ENCODE measurements at regions of chr3 and their contacts with region 1.

Region 1: DNA sequence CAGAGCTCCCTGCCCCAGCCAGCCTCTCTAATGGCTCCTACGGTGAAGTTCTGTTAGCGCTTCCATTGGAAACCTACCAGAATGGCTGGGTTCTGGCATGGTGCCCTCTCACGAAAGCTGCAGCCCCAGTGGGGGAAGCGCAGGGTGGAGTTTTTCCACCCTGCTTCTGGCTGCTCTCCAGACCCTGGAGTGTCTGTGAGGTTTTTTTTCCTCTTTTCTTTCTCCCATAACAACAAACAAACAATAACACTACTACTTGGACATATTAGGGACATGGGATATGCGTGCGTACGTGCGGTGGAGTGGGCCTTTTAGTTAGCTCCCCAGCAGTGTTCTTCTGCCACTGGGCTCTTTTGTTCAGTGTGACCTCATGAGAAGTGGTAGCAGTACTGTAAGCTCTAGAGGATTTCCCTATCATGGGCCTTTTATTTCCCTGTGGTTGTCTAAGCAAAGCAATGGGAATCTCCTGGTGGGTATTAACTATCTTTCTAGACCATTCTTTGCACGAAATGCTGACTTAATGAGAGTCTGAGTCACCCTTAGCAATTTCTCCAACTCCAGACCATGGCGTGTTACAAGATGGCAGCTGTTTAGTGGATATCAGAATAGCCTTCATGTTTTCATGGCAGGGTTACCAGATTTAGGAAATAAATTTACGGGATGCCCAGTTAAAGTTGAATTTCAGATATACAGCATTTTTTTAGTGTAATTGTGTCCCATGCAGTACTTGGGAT is 161.9 kb downstream of the FNDC3B start:
- DNase-seq: peak; percentile 88
- ATAC-seq: peak; percentile 90

Region 2: GRCh38 chr3:172153335-172153861 is 47.9 kb before region 1 on chr3:
- intact Hi-C with region 1: loop called (anchors 5 kb)
- DNase-seq: peak; percentile 94
- ATAC-seq: peak; percentile 98

Region 3: DNA sequence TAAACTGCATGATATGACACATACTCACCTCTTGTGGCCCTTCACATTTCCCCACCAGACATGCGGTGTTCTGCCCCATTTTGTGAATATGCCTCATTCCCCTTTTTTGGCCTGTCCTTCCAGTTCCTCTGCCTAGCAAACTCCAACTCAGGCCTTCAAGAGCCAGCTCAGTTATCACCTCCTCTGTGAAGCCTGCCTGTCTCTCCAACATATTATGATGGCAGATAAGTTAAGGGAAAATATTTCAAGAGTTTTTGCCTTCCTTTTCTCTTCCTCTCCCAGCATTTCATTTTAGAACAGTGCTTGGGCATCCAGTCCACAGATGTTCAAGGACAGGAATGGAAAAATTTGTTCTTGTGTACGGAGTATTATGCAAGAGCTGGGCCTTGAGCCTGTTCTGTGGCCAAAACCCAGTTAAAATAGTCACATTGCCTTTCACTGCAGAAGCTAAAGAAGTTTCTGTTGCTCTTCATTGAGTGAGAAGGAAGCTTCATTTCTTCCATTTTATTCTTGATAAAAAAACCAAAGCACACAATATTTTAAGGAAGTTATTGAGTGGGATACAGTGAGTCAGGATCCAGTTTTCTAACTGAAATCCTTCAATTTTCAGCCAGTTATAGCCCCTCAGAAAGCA is 54.9 kb after region 1 on chr3:
- intact Hi-C with region 1: loop called (anchors 5 kb)
- DNase-seq: no peak
- ATAC-seq: peak; percentile 85

Region 4: DNA sequence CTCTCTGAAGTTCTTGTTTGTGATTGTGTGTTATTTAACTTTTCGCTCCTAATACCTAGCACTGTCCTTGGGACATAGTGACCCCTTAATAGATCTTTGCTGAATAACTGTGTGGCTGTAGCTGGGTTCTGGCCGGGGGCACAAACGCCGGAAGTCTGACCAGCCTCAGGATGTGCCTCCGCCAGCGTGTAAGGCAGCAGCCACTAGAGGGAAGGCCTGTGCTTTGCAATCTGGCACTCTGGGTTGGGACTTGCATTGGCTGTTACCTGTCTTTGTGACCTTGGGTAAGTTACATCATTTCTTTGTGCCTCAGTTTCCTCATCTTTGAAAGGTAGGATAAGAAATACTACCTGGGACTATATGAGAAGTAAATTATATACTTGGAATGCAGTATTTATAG is 88.3 kb after region 1 on chr3:
- intact Hi-C with region 1: loop called (anchors 5 kb)
- DNase-seq: peak; percentile 65
- ATAC-seq: no peak

Region 5: DNA sequence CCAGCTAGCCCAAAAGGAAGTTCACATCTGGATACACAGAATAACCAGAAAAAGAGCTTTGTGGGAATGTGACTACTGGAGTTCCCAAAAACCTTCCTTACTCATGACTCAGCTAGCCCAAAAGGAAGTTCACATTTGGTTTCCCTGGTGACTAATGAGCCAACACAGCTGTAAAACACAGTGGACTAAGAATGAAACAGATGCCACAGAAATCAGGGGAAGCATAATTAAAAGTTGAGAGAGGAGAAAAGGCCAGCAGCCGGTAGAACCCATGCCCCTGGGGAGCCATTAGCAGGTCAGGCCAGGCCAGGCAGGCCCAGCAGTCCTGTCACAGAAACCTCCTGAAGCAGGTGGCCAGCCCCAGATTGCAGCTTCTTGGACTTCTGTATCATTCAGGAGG is 116.7 kb after region 1 on chr3:
- intact Hi-C with region 1: loop called (anchors 5 kb)
- DNase-seq: no peak
- ATAC-seq: peak; percentile 72

Measured in Right ventricle myocardium inferior (tissue), 1 donor.